Common myeloid progenitor, CD34-positive (primary cell): ENCODE measurements at regions of chr4 and their contacts with region 1.

Region 1: GRCh38 chr4:95544113-95545103 is 4.4 kb downstream of the UNC5C start:
- DNase-seq: peak in 2 of 3 donors; percentile 19 to 45
- H3K4me3 ChIP-seq: no peak overlapping the region
- H3K27ac ChIP-seq: no peak overlapping the region
- H3K4me1 ChIP-seq: peaks cover 0 to 35% (median 18%) of the 10 kb centered on the region in 4 experiments
- H3K27me3 ChIP-seq: peaks cover 0 to 33% (median 20%) of the 10 kb centered on the region in 5 experiments

Region 2: GRCh38 chr4:95528388-95528948 is 15.9 kb before region 1 on chr4:
- CTCF ChIA-PET with region 1: interaction called, 15 read pairs
- POLR2A ChIA-PET with region 1: no interaction called
- DNase-seq: no peak
- H3K4me3 ChIP-seq: no peak overlapping the region
- H3K27ac ChIP-seq: no peak overlapping the region
- H3K4me1 ChIP-seq: peaks cover 0 to 3% (median 0%) of the 10 kb centered on the region in 4 experiments
- H3K27me3 ChIP-seq: no peaks in the 10 kb centered on the region

Region 3: DNA sequence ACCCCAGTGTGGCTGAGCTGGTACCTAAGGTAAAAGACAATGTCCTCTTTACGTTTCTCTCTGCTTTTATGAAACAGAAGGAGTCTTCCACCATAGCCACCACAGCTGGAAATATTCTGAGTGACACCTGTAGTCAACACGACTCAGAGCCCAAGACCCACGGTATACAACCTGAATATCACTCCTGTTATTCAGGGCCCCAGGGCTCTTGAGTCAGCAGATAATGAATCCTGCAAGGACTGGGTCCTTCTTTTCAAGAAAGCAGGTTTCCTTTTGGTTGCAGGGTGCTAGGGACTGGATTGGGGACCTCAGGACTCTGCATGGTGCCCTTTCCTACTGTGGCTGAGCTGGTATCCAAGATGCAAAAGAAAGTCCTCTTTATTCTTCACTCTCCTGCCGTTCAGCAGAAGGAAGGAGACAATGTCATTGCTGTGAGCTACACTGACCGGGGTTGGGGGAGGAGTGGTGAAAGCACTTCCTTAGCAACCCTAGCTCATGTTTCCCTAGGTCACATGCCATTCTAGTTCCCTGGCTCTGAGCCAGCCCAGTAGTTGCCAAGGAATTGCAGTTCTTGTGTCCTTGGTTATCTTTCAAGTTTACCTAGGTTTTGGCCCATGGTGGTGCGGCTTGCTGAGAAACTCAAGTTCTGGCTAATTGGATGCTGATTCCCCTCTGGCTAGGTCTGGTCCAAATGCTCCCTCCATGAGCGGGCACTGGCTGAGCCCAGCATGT is 28.1 kb after region 1 on chr4:
- CTCF ChIA-PET with region 1: no interaction called
- POLR2A ChIA-PET with region 1: no interaction called
- DNase-seq: peak; percentile 68 to 95 (median 94)
- H3K4me3 ChIP-seq: peak overlapping the region in 2 of 7 experiments; percentile 36 to 40
- H3K27ac ChIP-seq: no peak overlapping the region
- H3K4me1 ChIP-seq: peaks cover 0 to 14% (median 10%) of the 10 kb centered on the region in 4 experiments
- H3K27me3 ChIP-seq: no peaks in the 10 kb centered on the region